Activated T-helper 1 cell treated with anti-CD3 and anti-CD28 coated beads, Interleukin-12 subunit alpha, Interleukin-12 subunit beta, Interleukin-2, Interleukin-4 antibody, amounts not matched to agents 30 ng/mL and 10 ng/mL and 1 ng/mL, durations not matched to agents 14 hours and 24 hours and 36 hours (primary cell): ENCODE measurements at regions of chr1 and their contacts with region 1.

Region 1: DNA sequence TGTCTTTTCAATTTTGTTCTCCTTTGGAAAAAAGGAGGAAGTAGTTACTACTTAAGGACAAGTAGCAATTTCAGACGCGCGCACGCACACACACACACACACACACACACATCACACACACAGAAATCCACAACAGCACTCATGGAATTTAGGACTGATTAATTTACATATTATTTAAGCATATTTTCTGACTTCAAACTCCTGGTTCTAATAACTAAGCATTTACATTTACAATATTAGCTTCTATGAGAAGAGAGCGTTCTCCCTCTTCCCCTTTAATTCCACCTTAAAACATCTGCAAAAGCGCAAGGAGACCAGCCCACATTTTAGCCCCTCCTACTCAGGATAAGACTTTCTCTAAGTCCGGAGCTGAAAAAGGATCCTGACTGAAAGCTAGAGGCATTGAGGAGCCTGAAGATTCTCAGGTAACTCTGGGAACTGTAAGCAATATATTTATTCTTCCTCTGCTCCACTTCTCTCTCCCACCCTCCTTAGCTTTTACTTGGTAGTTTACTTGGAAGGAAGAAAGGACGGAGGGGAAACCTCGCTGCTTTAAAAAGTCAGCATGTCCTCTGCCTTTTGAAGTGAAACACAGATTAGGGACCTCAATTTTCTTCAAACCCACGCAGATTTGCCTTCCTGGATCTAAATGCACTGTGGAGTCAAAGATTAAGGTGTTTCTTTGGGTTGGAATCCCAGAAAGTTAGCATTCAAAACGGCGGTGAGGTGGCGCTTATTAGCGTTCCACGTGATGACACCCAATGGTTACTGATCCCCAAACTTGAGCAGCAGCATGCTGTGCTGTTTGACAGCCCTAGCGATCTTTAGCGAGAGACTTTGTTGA is at the start of gene PLA2G4A:
- DNase-seq: no peak
- H3K4me3 Mint-ChIP-seq: peak within 1 kb of the TSS; percentile 78
- H3K27ac Mint-ChIP-seq: no peak within 1 kb of the TSS
- H3K4me1 Mint-ChIP-seq: peaks cover 12% of the 10 kb centered on the region
- H3K27me3 Mint-ChIP-seq: peaks cover 36% of the 10 kb centered on the region
- total RNA-seq, gene PLA2G4A: 0.20 and 0.21 TPM in 2 replicates

Region 2: DNA sequence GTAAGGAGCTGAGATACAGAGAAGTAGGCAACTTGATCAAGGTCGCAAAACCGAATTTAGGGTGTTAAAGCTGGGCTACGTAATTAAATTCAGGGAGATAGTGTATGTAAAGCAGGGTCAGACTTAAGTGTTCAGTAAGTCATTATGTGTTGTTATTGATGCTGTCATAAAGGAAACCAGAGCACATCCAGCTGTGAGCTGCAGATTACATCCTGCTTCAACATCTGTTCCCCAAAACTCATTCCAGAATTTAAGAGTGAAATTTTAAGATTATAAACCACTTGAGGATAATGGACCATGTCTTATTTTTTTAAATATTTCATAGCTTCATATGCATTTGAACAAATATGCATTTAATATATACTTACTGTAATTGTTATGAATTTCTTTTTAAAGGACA is 1561.5 kb before region 1 on chr1:
- intact Hi-C with region 1: no loop called
- DNase-seq: no peak
- H3K4me3 Mint-ChIP-seq: no peak overlapping the region
- H3K27ac Mint-ChIP-seq: no peak overlapping the region
- H3K4me1 Mint-ChIP-seq: no peaks in the 10 kb centered on the region
- H3K27me3 Mint-ChIP-seq: no peaks in the 10 kb centered on the region

Region 3: DNA sequence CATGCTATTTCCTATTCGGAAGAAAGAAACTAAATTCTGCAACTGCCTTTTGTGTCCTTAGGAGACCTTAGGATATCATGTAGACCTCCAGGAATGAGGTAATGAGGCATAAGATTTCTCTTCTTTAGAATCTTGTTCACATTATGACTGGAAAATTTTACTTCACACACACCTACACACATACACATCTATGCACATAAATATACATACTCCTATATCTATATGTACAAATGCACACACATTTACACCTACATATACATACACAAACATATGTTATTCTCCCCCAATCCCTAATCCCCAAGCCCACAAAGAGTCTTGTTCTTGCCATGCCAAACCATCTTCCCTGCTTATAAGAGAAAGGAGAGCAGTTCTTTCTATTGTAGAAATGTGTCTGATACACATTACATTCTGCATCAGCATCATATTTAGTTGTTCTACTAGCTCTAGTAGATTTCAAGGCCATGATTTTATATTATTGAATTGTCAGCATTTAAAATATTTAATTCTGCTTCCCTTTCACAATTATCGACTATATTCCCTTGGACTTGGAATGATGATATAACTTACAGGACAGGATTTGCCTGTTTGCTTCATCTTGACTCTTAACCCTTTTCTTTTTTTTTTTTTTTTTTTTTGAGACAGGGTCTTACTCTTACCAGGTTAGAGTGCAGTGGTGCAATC is 332.5 kb before region 1 on chr1:
- intact Hi-C with region 1: loop called (anchors 1 kb)
- DNase-seq: no peak
- H3K4me3 Mint-ChIP-seq: no peak overlapping the region
- H3K27ac Mint-ChIP-seq: no peak overlapping the region
- H3K4me1 Mint-ChIP-seq: no peaks in the 10 kb centered on the region
- H3K27me3 Mint-ChIP-seq: peaks cover under 1% of the 10 kb centered on the region